Common myeloid progenitor, CD34-positive (primary cell): ENCODE measurements at regions of chr1 and their contacts with region 1.

Region 1: DNA sequence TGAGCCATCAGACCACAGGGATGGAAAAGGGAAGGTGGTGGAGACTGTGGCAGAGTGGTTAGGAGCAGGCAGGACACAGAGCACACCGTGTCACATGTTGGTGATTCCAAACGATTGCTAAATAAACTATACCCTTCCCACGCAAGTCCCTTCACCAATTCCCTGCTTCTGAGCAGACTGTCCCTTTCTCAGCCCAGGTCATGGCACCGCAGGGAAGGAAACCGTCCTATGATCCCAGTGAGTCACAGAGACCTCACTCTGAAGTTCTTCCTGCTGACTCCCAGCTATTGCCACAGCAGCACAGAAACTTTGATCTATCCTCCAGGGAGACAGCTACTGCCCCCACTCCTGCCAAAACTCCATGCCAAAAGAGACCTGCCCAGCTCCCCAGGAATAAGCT is 19.2 kb downstream of the RIMS3 start:
- DNase-seq: no peak
- H3K4me3 ChIP-seq: no peak overlapping the region
- H3K27ac ChIP-seq: no peak overlapping the region
- H3K4me1 ChIP-seq: peaks cover 0 to 3% (median 1%) of the 10 kb centered on the region in 4 experiments
- H3K27me3 ChIP-seq: peaks cover 0 to 11% (median 0%) of the 10 kb centered on the region in 5 experiments

Region 2: DNA sequence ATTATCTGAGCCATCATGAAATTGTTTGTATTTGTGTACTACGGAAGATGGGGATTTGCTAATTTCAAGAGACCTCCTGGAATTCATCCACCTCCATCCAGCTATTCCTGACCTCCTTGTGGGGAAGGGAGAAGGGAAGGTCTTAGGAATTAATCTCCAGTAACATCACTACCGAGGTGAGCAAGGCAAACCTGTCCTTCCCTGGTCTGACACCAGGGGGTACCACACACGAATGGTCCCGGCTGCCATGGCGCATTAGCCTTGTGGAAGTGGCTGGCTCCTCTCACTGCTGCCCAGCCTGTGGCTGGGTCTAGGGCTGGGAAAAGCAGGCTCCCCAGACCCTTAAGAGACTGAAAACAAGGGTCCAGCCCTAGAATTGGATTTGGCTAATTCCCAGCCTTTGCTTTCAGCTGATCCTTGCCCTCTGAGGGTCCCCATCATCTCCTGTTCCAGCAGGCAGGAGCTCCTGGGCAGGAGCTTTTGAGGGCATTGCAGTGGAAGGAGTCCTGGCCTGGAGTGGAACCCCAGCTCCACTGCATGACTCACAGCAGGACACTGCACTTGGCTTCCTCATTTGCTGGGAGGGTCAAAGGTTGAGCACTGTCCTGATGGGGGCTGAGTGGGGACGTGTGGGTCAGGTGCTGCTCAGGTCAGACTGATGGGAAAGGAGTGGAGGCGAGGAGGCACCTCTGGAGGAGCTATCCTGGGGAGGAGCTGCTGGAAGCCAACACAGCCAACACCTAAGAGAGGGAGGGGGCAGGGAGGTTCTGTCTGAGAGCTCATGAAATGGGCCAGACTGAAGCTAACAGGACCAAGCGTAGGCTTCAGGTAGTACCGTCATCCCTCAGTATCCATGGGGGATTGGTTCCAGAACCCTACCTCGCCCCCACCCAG is 15.6 kb before region 1 on chr1:
- CTCF ChIA-PET with region 1: interaction called, 11 read pairs
- POLR2A ChIA-PET with region 1: interaction called, 4 read pairs
- DNase-seq: peak; percentile 47 to 68 (median 59)
- H3K4me3 ChIP-seq: no peak overlapping the region
- H3K27ac ChIP-seq: no peak overlapping the region
- H3K4me1 ChIP-seq: peaks cover 0 to 16% (median 2%) of the 10 kb centered on the region in 4 experiments
- H3K27me3 ChIP-seq: peaks cover 0 to under 1% (median 0%) of the 10 kb centered on the region in 5 experiments